ENCODE measurements at regions of chr5 and their contacts with region 1.

Region 1: GRCh38 chr5:141564216-141564692 is 54.5 kb downstream of the DIAPH1 start:
- DNase-seq: peak; percentile 94
- H3K4me3 ChIP-seq: no peak overlapping the region
- H3K27ac ChIP-seq: peak overlapping the region; percentile 76
- H3K4me1 ChIP-seq: peaks cover 21% of the 10 kb centered on the region
- H3K27me3 ChIP-seq: no peaks in the 10 kb centered on the region
- CTCF ChIP-seq: peak; percentile 68 to 93
- POLR2A ChIP-seq: no peak

Region 2: GRCh38 chr5:141223112-141223783 is 341.0 kb before region 1 on chr5 and contains the start of gene PCDHB14:
- CTCF ChIA-PET with region 1: interaction called, 48 read pairs
- POLR2A ChIA-PET with region 1: no interaction called
- dilution Hi-C with region 1: no loop called
- intact Hi-C with region 1: no loop called
- DNase-seq: peak; percentile 31
- H3K4me3 ChIP-seq: peak within 1 kb of the TSS in 1 of 3 experiments; percentile 32
- H3K27ac ChIP-seq: no peak within 1 kb of the TSS
- H3K4me1 ChIP-seq: no peaks in the 10 kb centered on the region
- H3K27me3 ChIP-seq: no peaks in the 10 kb centered on the region
- CTCF ChIP-seq: no peak
- POLR2A ChIP-seq: no peak
- total RNA-seq, gene PCDHB14: 0.55 and 1.0 TPM in 2 replicates

Region 3: DNA sequence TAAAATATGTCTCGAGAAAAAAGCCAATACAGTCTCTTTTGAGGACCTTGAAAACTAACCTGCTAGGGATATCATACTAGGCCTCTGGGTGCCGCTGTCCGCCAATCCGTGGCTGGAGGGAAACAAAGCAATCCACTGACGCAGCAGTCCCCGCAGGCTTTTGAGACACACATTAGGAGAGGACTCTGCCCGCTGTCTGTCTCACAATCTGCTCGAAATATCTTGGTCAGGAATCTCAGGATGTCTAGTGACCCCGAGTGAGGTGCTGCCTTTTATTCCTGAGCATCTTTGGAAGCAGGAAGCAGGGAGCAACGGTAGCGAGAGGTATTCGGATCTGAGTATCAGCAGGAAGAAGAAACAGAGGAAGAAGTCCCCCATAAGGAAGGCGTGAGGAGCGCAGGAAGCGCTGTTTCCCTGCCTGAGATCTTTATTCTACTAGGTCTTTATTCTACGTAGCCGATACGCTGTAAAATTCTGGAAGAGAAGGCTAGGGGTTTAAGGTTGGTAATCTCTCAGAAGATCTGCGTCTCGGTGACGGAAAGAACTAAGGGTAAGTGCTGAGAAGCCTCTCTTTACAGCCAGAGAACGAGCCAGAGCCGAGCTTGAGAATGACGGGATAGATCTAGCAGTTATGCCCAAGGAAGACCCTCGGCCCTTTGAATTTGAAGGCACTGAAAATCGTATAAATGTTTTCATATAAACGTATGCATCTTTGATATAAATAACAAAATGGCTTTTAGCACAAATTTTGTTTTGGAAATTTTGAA is 238.0 kb before region 1 on chr5:
- CTCF ChIA-PET with region 1: interaction called, 33 read pairs
- POLR2A ChIA-PET with region 1: interaction called, 4 read pairs
- dilution Hi-C with region 1: no loop called
- intact Hi-C with region 1: loop called (anchors 1 kb)
- DNase-seq: peak; percentile 77
- H3K4me3 ChIP-seq: peak overlapping the region; percentile 27 to 74 (median 50)
- H3K27ac ChIP-seq: no peak overlapping the region
- H3K4me1 ChIP-seq: no peaks in the 10 kb centered on the region
- H3K27me3 ChIP-seq: peaks cover 14 to 31% of the 10 kb centered on the region in 2 experiments
- CTCF ChIP-seq: peak; percentile 65 to 70
- POLR2A ChIP-seq: no peak

Region 4: DNA sequence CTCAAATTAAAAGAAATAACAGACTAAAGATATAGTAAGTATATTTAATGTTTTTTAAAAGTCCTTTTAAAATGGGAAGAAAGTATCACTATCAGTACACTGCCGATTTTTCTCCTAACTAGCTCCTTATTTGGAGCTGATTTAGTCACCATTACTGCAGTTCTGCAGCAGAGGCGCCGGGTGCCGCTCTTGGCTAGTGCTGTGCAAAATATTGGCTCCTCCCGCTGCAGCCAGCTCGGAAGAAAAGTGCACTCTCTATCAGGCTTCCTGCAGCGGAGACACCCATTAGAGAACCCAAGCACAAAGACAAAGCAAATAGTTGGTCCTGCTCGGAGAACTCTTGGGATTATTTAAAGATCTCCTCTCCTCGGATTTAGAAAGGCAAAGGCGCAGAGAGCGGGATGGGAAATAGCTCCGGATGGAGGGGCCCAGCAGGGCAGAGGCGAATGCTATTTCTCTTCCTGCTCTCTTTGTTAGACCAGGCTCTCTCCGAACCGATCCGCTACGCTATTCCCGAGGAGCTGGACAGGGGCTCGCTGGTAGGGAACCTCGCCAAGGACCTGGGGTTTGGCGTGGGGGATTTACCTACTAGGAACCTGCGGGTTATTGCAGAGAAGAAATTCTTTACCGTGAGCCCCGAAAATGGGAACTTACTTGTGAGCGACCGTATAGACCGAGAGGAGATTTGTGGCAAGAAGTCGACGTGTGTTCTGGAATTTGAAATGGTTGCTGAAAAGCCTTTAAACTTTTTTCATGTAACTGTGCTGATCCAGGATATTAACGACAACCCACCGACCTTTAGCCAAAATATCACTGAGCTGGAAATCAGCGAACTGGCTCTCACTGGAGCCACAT is 194.0 kb before region 1 on chr5 and contains the start of gene PCDHGB3:
- CTCF ChIA-PET with region 1: interaction called, 57 read pairs
- POLR2A ChIA-PET with region 1: no interaction called
- dilution Hi-C with region 1: no loop called
- intact Hi-C with region 1: loop called (anchors 1 kb)
- DNase-seq: peak; percentile 40
- H3K4me3 ChIP-seq: peak within 1 kb of the TSS in 1 of 3 experiments; percentile 23
- H3K27ac ChIP-seq: no peak within 1 kb of the TSS
- H3K4me1 ChIP-seq: no peaks in the 10 kb centered on the region
- H3K27me3 ChIP-seq: peaks cover 40 to 91% of the 10 kb centered on the region in 2 experiments
- CTCF ChIP-seq: peak in 1 of 2 donors; percentile 24
- POLR2A ChIP-seq: no peak
- total RNA-seq, gene PCDHGB3: 1.7 and 2.0 TPM in 2 replicates

Region 5: DNA sequence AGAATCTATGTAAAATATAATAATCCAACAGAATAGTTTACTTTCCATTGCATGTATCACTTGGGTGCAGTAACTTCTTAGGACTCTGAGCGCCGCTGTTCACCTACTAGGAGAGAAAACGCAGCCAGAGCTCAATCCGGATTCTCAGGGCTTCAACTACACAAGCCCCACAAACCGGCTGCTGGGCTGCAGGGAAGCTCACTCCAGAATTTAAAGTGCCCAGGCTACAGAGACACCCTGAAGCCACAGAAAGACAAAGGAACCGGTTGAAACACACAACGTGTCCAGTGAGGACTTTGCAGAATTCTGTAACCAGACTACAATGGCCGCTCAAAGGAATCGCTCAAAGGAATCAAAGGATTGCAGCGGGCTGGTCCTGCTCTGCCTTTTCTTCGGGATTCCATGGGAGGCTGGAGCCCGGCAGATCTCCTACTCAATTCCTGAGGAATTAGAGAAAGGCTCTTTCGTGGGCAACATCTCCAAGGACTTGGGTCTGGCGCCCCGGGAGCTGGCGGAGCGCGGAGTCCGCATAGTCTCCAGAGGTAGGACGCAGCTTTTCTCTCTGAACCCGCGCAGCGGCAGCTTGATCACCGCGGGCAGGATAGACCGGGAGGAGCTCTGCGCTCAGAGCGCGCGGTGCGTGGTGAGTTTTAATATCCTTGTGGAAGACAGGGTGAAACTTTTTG is 151.3 kb before region 1 on chr5 and contains the start of gene PCDHGA10:
- CTCF ChIA-PET with region 1: interaction called, 335 read pairs
- POLR2A ChIA-PET with region 1: interaction called, 3 read pairs
- dilution Hi-C with region 1: no loop called
- intact Hi-C with region 1: loop called (anchors 1 kb)
- DNase-seq: peak; percentile 72
- H3K4me3 ChIP-seq: peak within 1 kb of the TSS; percentile 14 to 72 (median 34)
- H3K27ac ChIP-seq: no peak within 1 kb of the TSS
- H3K4me1 ChIP-seq: peaks cover 6% of the 10 kb centered on the region
- H3K27me3 ChIP-seq: peaks cover 48 to 84% of the 10 kb centered on the region in 2 experiments
- CTCF ChIP-seq: peak; percentile 58 to 76
- POLR2A ChIP-seq: no peak
- total RNA-seq, gene PCDHGA10: 4.4 and 5.8 TPM in 2 replicates

Region 6: DNA sequence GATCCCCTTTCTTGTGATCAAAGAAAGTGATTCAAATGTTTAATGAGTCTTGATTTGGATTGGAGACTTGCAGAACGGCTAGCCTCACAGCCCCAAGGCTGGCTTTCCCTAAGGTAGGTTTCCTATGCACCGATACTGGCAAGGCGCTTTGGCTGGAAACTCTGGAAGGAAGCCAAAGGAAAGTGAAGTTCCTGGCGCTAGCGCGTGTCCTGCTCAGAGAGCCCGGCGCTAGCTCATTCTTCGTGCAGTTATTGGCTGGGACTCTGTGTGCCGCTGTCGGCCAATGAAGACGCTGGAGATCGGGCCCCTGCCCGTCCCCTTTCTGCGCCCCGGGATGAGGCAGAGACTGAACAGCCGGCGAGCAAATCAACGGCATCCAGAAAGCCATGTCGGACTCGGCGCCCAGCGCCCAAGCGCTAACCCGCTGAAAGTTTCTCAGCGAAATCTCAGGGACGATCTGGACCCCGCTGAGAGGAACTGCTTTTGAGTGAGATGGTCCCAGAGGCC is 88.6 kb before region 1 on chr5 and contains the start of gene PCDHGC3:
- CTCF ChIA-PET with region 1: interaction called, 18 read pairs
- POLR2A ChIA-PET with region 1: no interaction called
- dilution Hi-C with region 1: no loop called
- intact Hi-C with region 1: no loop called
- DNase-seq: peak; percentile 96
- H3K4me3 ChIP-seq: peak within 1 kb of the TSS; percentile 32 to 70 (median 50)
- H3K27ac ChIP-seq: no peak within 1 kb of the TSS
- H3K4me1 ChIP-seq: peaks cover 7% of the 10 kb centered on the region
- H3K27me3 ChIP-seq: peaks cover 0 to 5% of the 10 kb centered on the region in 2 experiments
- CTCF ChIP-seq: peak in 1 of 2 donors; percentile 8
- POLR2A ChIP-seq: no peak
- total RNA-seq, gene PCDHGC3: 25.4 and 36.1 TPM in 2 replicates

Region 7: DNA sequence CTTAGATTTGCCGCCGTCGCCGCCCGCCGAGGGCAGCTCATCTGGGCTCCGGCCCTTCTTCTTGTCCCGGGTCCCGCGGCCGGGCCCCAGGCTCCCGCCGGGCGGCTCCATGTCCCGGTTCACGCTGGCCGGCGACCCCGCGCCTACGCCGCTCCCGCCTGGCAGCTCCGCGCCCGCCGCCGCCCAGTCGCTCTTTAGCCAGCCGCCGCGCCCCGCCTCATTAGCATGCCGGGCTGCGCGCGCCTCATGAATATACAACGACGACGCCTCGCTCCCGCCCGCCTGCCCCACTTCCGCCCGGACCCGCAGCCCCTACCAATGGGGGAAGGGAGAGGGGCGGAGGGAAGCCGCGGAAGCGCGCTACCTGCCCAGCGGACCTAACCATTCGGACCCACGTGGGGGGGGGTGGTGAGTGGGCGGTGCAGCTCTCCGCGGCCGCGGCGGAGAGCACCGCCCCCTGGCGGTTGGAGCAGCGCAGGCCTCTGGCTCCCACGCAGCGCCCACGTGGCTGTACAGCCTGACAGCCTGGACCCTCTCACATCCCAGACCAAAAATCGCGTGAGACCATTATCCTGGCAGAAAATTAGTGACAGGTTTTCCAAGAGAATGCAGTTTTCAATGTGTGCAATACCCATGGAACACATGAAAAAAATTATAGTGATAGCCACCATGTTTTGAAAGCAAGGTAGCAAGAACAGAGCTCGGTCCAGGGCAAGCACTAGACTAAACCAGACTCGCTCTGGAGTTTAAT is 54.7 kb after region 1 on chr5 and contains the start of gene DIAPH1:
- CTCF ChIA-PET with region 1: interaction called, 26 read pairs
- POLR2A ChIA-PET with region 1: no interaction called
- dilution Hi-C with region 1: no loop called
- intact Hi-C with region 1: no loop called
- DNase-seq: peak; percentile 95
- H3K4me3 ChIP-seq: peak within 1 kb of the TSS; percentile 77 to 84 (median 80)
- H3K27ac ChIP-seq: peak within 1 kb of the TSS; percentile 22
- H3K4me1 ChIP-seq: peaks cover 18% of the 10 kb centered on the region
- H3K27me3 ChIP-seq: no peaks in the 10 kb centered on the region
- CTCF ChIP-seq: peak; percentile 98 to 99
- POLR2A ChIP-seq: peak; percentile 77
- total RNA-seq, gene DIAPH1: 103 and 105 TPM in 2 replicates